AG04449 (cell line): ENCODE measurements at regions of chrX and their contacts with region 1.

Region 1: DNA sequence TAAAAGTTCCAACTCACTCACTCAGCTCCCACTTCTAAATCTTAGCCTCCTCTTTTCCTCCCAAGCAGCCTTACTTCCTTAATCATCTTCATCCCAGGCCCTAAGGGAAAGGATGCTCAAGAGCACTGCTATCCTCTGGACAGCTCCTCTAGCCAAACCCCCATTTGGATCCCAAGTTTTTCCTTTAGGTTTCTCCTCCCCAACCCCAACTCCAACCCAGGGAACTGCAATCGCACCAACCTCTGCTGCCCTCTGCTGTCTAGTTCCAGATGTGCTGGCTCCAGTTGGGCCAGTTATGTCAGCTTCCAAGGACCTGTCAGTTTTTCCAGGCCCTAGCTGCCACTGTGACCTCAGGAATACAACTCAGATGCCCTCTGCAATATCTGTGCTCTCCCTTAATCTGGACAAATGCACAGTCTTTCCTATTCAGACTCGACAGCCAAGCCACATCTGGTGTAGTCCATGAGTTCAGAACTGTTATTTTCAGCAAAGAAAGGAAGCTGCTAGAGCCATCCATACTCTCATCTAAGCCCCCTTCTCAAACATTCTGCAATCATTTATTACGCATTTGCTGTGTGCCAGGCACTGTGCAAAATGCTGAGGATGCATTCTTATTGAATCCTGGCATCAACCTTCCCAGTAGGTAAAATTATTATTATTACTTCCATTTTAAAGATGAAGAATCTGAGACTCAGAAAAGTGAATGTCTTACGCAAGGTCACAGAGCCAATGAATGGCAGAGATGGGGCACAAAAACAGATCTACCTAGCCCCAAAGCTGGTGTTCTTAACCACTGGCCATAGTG is 12.3 kb upstream of the XPNPEP2 start:
- DNase-seq: no peak
- H3K4me3 ChIP-seq: no peak overlapping the region
- CTCF ChIP-seq: peak; percentile 75

Region 2: GRCh38 chrX:129593137-129593536 is 133.4 kb before region 1 on chrX:
- CTCF ChIA-PET with region 1: no interaction called
- POLR2A ChIA-PET with region 1: no interaction called
- DNase-seq: no peak
- H3K4me3 ChIP-seq: no peak overlapping the region
- CTCF ChIP-seq: no peak

Region 3: GRCh38 chrX:129606918-129607317 is 119.6 kb before region 1 on chrX:
- CTCF ChIA-PET with region 1: interaction called, 65 read pairs
- POLR2A ChIA-PET with region 1: no interaction called
- DNase-seq: no peak
- H3K4me3 ChIP-seq: no peak overlapping the region
- CTCF ChIP-seq: peak; percentile 47

Region 4: GRCh38 chrX:129637217-129638109 is 89.0 kb before region 1 on chrX:
- CTCF ChIA-PET with region 1: interaction called, 260 read pairs
- POLR2A ChIA-PET with region 1: no interaction called
- DNase-seq: no peak
- H3K4me3 ChIP-seq: no peak overlapping the region
- CTCF ChIP-seq: peak; percentile 72

Region 5: DNA sequence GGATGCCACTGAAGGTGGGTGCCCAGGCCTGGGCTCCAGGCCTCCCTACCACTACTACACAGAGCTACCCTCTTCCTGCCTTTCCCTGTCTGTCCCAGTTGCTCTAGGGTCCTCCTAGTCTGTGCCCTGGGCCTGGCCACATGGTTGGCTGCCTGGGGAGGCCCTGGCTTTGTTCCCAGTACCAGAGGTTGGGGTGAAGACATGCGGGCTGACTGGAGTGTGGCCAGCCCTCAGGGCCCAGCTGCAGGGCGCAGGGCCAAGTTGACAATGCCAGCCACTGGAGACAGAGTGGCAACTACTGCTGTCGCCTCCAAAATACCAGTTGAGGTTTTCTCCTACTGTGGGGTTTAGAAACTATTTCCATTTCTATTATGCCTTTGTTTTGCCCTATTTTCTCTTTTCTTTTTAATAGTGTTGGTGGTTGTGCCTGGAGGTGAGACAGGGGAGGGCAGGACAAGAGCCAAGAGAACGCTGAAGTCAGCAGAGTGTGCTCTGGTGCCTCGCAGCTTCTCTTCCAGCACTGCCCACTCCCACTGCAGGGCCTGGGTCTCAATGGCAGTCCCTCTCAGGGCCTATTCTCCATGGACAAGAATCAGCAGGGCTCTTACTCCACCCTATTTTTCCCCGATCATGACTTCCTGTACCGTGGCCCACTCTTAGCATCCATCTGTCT is 20.0 kb before region 1 on chrX:
- CTCF ChIA-PET with region 1: interaction called, 19 read pairs
- POLR2A ChIA-PET with region 1: no interaction called
- DNase-seq: no peak
- H3K4me3 ChIP-seq: no peak overlapping the region
- CTCF ChIP-seq: no peak

Region 6: GRCh38 chrX:129737916-129738315 is 11.4 kb after region 1 on chrX:
- CTCF ChIA-PET with region 1: interaction called, 50 read pairs
- POLR2A ChIA-PET with region 1: no interaction called
- DNase-seq: no peak
- H3K4me3 ChIP-seq: no peak overlapping the region
- CTCF ChIP-seq: no peak